H1 (cell line): ENCODE measurements at regions of chr19 and their contacts with region 1.

Region 1: DNA sequence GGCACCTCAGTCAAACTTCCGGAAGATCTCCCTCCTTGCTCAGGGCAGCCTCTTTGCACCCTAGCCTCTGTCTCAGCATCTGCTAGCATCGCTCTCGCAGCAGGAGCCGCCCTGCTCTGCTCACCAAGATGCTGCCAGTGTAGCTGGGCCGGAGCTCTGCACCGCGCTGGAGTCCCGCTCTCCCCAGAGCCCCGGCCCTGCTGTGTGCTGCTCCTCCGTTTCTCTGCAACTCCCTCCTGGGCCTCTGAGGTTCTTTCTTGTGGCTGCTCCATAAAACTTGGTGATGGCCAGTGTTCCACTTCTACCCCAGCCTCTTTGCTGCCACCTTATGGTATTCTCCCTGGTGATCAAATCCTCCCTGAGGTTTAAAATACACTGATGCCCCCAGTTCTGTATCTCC is 198.0 kb downstream of the UQCRFS1 start:
- DNase-seq: no peak
- H3K4me3 ChIP-seq: no peak overlapping the region
- H3K27ac ChIP-seq: no peak overlapping the region
- H3K4me1 ChIP-seq: peaks cover 0 to 2% (median under 1%) of the 10 kb centered on the region in 4 experiments; a peak in 3 of 7 replicates
- H3K27me3 ChIP-seq: no peaks in the 10 kb centered on the region; a peak in 2 of 7 replicates
- CTCF ChIP-seq: peak in 2 of 3 experiments; percentile 9 to 20; a peak in 1 of 4 replicates
- EP300 ChIP-seq: no peak
- POLR2A ChIP-seq: no peak
- RAD21 ChIP-seq: peak; percentile 22 to 43; a peak in 3 of 4 replicates

Region 2: DNA sequence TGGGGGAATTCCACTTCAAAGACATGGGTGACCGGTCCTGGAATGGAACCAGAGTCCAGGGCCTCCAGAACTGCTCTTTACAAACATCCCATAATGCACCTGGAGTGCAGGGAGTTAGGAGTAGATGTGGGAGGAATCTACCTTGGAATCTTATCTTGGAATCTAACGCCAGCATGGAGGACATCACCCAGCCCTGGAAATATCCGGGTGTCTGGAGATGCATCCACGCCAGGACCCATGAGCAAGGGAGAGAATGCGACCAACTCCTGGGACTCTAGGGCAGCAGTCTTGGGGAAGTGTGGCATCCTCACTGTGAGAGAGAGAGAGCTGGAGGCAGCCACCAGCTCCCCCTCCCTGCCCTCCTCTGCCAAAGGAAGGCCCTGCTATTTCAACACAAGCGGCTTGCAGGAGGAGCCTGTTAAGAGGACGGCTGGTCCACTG is 13.7 kb before region 1 on chr19:
- CTCF ChIA-PET with region 1: interaction called, 35 read pairs
- POLR2A ChIA-PET with region 1: no interaction called
- DNase-seq: no peak
- H3K4me3 ChIP-seq: no peak overlapping the region
- H3K27ac ChIP-seq: no peak overlapping the region
- H3K4me1 ChIP-seq: peaks cover 0 to 11% (median 6%) of the 10 kb centered on the region in 4 experiments; a peak in 5 of 7 replicates
- H3K27me3 ChIP-seq: 0 out of 7 replicates have a peak, but pooled peaks cover 0 to 2% (median 0%) of the 10 kb centered on the region in 4 experiments
- CTCF ChIP-seq: no peak
- EP300 ChIP-seq: no peak
- POLR2A ChIP-seq: no peak
- RAD21 ChIP-seq: no peak

Region 3: GRCh38 chr19:29029268-29029958 is 14.5 kb after region 1 on chr19:
- CTCF ChIA-PET with region 1: interaction called, 10 read pairs
- POLR2A ChIA-PET with region 1: no interaction called
- DNase-seq: no peak
- H3K4me3 ChIP-seq: no peak overlapping the region
- H3K27ac ChIP-seq: no peak overlapping the region
- H3K4me1 ChIP-seq: peaks cover 0 to 2% (median 0%) of the 10 kb centered on the region in 4 experiments; a peak in 1 of 7 replicates
- H3K27me3 ChIP-seq: no peaks in the 10 kb centered on the region
- CTCF ChIP-seq: no peak
- EP300 ChIP-seq: no peak
- POLR2A ChIP-seq: no peak
- RAD21 ChIP-seq: no peak

Region 4: DNA sequence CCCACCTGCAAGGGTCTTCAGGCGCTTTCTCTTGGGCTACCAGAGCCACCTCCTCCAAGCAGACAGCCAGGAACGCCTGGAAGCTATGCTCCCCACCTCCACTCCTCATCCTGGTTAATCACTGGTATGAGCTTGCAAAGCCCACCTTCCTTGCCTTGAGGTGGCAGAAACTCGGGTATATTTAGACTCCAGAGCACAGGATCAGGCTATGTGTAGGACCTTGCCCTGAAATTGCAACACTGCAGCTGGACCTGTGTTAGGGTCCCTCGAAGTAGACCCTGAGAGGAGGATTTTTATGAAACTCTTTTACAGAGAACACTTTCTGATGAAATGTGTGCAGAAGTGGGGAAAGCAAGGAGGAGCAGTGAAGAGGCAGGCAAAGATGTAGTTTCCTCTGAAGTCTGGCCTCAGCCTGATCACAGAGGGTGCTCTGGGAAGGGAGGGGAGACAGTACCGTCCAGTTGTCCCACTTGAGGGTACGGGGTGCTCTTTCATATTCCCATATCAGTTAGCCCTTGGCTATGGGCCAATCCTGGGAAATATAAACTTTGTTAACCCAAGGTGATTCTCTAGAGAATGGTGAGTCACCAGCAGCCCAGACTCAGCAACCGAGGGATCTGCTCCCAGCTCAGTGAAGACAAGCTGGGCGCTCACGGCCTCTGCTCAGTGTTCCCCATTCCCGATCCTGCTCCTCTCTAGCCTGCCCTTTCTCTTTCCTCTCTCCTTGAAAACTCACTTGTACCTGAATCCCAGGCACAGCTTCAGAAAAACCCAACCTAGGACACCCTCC is 40.2 kb after region 1 on chr19:
- CTCF ChIA-PET with region 1: interaction called, 14 read pairs
- POLR2A ChIA-PET with region 1: no interaction called
- DNase-seq: no peak
- H3K4me3 ChIP-seq: no peak overlapping the region
- H3K27ac ChIP-seq: no peak overlapping the region
- H3K4me1 ChIP-seq: no peaks in the 10 kb centered on the region; a peak in 1 of 7 replicates
- H3K27me3 ChIP-seq: no peaks in the 10 kb centered on the region
- CTCF ChIP-seq: no peak
- EP300 ChIP-seq: no peak
- POLR2A ChIP-seq: no peak
- RAD21 ChIP-seq: no peak

Region 5: GRCh38 chr19:29121684-29122083 is 106.8 kb after region 1 on chr19:
- CTCF ChIA-PET with region 1: interaction called, 11 read pairs
- POLR2A ChIA-PET with region 1: no interaction called
- DNase-seq: peak; percentile 13 to 80
- H3K4me3 ChIP-seq: no peak overlapping the region
- H3K27ac ChIP-seq: no peak overlapping the region
- H3K4me1 ChIP-seq: no peaks in the 10 kb centered on the region
- H3K27me3 ChIP-seq: no peaks in the 10 kb centered on the region
- CTCF ChIP-seq: peak; percentile 69 to 80 (median 69)
- EP300 ChIP-seq: no peak
- POLR2A ChIP-seq: no peak
- RAD21 ChIP-seq: peak; percentile 61 to 73